ENCODE measurements at regions of chr16 and their contacts with region 1.

Region 1: DNA sequence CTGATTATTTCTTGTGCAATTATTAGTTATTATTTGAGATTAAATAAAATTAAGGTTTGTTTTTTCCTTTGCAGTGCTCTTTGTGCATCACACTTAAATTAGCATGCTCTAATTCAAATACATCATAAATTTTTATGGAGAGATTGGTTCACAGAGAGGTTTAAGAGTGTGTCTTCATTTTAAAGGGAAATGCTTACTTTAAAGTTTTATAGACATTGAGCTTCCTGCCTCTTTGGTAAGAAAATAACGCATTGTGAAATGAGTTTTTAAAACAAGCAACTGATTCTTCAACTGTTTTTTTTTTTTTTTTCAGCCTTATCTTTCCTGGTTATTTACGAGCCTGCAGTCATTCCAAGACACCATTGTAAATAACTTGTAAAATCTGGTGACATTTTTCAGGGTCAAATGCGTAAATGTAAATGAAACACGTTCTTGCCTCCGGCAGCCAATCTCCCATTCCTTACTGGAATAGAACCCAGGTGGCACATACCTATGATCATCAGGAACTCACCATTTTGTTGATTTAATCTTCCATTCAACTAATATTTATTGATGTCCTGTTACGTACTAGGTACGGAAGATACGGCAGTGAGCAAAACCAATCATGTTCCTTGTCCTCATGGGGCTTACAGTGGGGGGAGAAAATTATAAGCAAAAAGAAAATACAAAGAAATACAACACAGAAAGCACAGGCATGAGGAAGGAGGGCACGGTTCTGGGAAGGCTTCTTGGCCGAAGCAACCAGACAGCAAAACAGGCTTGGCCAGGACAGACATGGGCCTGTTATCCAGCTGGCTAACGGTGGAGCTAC is 33.2 kb upstream of the CDYL2 start:
- DNase-seq: peak; percentile 90
- ATAC-seq: peak; percentile 75
- H3K4me3 ChIP-seq: peak overlapping the region; percentile 45
- H3K27ac ChIP-seq: peak overlapping the region; percentile 100
- H3K4me1 ChIP-seq: peaks cover 28% of the 10 kb centered on the region
- H3K27me3 ChIP-seq: no peaks in the 10 kb centered on the region
- CTCF ChIP-seq: no peak

Region 2: DNA sequence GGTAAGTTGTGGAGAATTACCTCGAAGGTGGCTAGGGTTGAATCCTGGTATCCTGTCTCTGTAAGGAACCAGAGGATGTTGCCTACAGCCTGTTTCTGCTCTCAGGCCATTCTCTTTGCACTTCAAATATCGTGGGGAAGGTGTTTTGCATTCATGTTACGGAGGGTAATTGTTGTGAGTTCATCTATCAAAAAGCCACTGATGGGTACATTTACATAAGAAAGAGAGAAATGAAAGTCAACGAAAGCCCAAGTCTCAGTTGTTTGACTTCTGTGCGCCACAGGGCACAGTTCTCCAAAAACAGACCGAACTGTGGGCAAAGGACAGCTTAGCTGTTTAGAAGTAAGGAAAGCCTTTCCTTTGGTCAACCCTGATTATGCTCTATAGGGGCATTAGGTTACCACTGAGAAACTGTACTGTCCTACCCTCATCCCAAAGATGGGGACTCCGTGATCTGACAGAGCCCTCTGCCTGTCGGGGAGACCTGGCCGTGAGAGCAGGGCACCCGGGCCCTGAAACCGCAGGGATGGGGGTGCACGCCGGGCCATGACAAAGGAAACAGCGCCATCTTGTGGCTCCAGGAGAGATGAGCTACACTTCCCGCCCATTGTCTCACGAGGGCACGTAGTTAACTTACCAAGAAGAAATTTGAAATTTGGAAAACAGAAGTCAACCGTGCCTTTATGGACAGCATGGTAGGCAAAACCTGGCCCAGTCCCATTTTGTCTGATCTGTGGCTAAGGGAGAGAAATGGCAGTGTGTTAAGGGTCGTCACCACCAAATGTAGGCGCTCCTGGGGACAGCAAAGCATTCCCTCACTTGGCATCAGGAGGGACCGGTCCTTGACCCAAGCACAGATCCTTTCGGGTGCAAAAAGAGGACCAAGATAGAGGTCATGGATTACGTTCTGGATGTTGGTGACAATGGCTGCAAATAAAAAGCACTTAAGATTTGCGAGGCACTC is 371.3 kb before region 1 on chr16:
- CTCF ChIA-PET with region 1: interaction called, 11 read pairs
- POLR2A ChIA-PET with region 1: no interaction called
- intact Hi-C with region 1: no loop called
- DNase-seq: peak; percentile 57
- ATAC-seq: peak; percentile 27; the same call in 1 of the 2 replicates
- H3K4me3 ChIP-seq: no peak overlapping the region
- H3K27ac ChIP-seq: no peak overlapping the region
- H3K4me1 ChIP-seq: no peaks in the 10 kb centered on the region
- H3K27me3 ChIP-seq: peaks cover 22% of the 10 kb centered on the region
- CTCF ChIP-seq: peak; percentile 88

Region 3: GRCh38 chr16:81006814-81007696 is 169.4 kb after region 1 on chr16 and contains the starts of genes CENPN and CMC2:
- CTCF ChIA-PET with region 1: no interaction called
- POLR2A ChIA-PET with region 1: no interaction called
- intact Hi-C with region 1: loop called (anchors 5 kb)
- DNase-seq: peak; percentile 93
- ATAC-seq: peak; percentile 90
- H3K4me3 ChIP-seq: peak within 1 kb of the TSS; percentile 99
- H3K27ac ChIP-seq: peak within 1 kb of the TSS; percentile 92
- H3K4me1 ChIP-seq: peaks cover 10% of the 10 kb centered on the region; the same call in 1 of the 2 replicates
- H3K27me3 ChIP-seq: no peaks in the 10 kb centered on the region
- CTCF ChIP-seq: no peak
- total RNA-seq, gene CENPN: 60.9 and 63.1 TPM in 2 replicates
- total RNA-seq, gene CMC2: 75.3 and 86.2 TPM in 2 replicates

Measured in PC-3 (cell line).